H1 (cell line): ENCODE measurements at regions of chr7 and their contacts with region 1.

Region 1: DNA sequence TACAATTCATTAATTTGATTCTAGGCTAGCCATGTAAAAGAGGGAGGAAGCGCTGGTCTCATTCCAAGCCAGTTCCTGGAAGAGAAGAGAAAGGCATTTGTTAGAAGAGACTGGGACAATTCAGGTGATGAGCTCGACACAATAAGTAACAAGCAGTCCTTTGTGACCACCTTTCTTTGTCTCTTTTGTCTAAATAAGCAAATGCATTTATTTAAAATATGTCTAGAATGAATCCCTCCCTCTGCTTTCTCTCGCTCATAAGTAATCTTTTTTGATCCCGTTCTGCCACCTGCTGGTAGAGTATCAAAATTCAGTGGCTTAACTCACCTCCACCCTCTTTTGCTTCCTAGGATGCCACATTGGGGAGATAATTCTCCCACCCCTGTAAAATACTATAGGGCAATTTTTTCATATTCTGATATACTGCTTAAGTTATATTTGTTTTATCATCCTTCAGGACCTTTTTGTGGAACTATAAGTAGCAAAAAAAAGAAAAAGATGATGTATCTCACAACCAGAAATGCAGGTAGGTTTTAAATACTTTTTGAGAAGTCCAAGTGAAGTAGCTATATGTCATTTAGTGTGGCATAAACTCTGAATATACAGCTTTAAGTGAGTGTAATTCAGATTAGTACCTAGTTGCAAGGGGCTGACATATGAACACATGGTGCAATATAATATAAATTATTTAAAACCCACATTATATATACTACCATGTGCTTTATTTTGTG is 91.5 kb downstream of the GSDME start:
- DNase-seq: peak in 1 of 2 experiments; percentile 21
- H3K4me3 ChIP-seq: no peak overlapping the region; a peak in 1 of 8 replicates
- H3K27ac ChIP-seq: no peak overlapping the region
- H3K4me1 ChIP-seq: peaks cover 0 to 4% (median 2%) of the 10 kb centered on the region in 4 experiments; a peak in 4 of 7 replicates
- H3K27me3 ChIP-seq: no peaks in the 10 kb centered on the region
- CTCF ChIP-seq: peak in 2 of 3 experiments; percentile 54 to 60; a peak in 2 of 4 replicates
- EP300 ChIP-seq: no peak
- POLR2A ChIP-seq: no peak
- RAD21 ChIP-seq: peak; percentile 74 to 77

Region 2: DNA sequence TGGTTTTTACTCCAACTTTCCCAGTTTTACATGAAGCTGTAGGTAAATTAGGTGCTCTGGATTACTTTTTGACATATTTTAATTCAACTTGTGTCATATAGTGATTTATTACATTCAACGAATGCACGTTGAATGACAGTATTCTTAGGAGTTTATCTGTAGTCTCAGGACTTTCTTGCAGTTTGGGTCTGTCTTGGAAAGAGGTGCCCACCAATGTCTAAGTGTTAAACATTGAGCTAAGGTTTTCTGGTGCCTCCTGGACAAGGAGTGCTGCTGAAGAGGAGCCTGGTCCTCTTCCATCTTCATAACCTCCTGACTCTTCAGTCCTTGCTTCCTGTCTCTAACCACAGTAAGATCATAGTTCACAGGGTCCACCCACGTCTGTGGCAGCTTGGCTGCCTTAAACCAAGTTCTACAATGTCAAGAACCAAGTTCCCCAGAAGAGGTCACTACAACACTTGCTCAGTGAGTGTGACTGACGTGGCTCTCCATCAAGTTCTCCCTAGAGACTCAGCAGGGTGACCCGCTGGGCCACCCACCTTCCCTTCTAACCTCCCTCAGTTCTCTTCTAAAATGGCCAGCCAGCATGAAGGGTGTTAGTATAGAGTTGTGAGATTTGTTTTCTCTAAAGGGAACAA is 375.6 kb before region 1 on chr7:
- CTCF ChIA-PET with region 1: interaction called, 16 read pairs
- POLR2A ChIA-PET with region 1: no interaction called
- DNase-seq: peak in 1 of 2 experiments; percentile 53
- H3K4me3 ChIP-seq: no peak overlapping the region
- H3K27ac ChIP-seq: no peak overlapping the region
- H3K4me1 ChIP-seq: peaks cover 0 to 4% (median 1%) of the 10 kb centered on the region in 4 experiments; a peak in 3 of 7 replicates
- H3K27me3 ChIP-seq: peaks cover under 1 to 9% (median 6%) of the 10 kb centered on the region in 4 experiments; a peak in 6 of 7 replicates
- CTCF ChIP-seq: peak; percentile 17 to 79 (median 62)
- EP300 ChIP-seq: no peak
- POLR2A ChIP-seq: no peak
- RAD21 ChIP-seq: peak; percentile 91 to 92

Region 3: DNA sequence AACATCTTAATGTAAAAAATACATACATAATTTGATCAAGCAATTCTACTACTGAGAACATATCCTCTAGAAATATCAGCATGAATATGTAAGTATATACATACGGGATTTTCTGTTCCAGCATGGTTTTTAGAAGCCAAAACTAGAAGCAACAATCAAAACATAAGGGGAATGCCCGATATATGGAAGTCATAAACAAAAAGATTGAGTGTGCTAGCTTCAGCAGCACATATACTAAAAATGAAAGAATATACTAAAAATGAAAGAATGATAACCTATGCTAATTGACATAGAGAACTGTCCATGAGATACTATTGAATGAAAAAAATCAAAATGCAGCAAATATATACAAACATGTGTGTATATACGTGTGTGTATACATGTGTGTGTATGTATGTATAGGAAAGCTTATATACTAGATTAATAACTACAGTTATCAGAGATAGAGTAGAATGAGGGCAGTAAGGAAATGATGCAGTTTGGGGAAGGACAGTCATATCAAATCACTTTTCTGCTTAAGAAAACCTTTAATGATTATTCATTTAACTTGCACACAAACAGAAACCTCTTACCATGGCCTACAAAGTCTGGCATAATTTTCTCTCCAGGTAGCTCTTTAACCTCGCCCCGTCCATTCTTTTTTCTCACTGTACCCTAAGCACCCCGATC is 308.9 kb before region 1 on chr7:
- CTCF ChIA-PET with region 1: no interaction called
- POLR2A ChIA-PET with region 1: no interaction called
- DNase-seq: no peak
- H3K4me3 ChIP-seq: no peak overlapping the region
- H3K27ac ChIP-seq: no peak overlapping the region
- H3K4me1 ChIP-seq: no peaks in the 10 kb centered on the region
- H3K27me3 ChIP-seq: no peaks in the 10 kb centered on the region
- CTCF ChIP-seq: no peak
- EP300 ChIP-seq: no peak
- POLR2A ChIP-seq: no peak
- RAD21 ChIP-seq: no peak

Region 4: GRCh38 chr7:24587848-24588247 is 77.9 kb before region 1 on chr7:
- CTCF ChIA-PET with region 1: interaction called, 22 read pairs
- POLR2A ChIA-PET with region 1: no interaction called
- DNase-seq: peak in 1 of 2 experiments; percentile 68
- H3K4me3 ChIP-seq: no peak overlapping the region
- H3K27ac ChIP-seq: no peak overlapping the region
- H3K4me1 ChIP-seq: peaks cover 0 to 4% (median 0%) of the 10 kb centered on the region in 4 experiments; a peak in 1 of 7 replicates
- H3K27me3 ChIP-seq: no peaks in the 10 kb centered on the region
- CTCF ChIP-seq: peak; percentile 38 to 94 (median 79)
- EP300 ChIP-seq: no peak
- POLR2A ChIP-seq: no peak
- RAD21 ChIP-seq: peak; percentile 95 to 96